HepG2 (cell line): ENCODE measurements at regions of chr22 and their contacts with region 1.

Region 1: GRCh38 chr22:35231585-35232084 is 25.7 kb upstream of the HMGXB4 start:
- DNase-seq: peak; percentile 75
- ATAC-seq: peak; percentile 89
- H3K4me3 ChIP-seq: peak overlapping the region in 1 of 3 experiments; percentile 48; a peak in 3 of 6 replicates
- H3K27ac ChIP-seq: no peak overlapping the region
- H3K4me1 ChIP-seq: peaks cover 31% of the 10 kb centered on the region
- H3K27me3 ChIP-seq: no peaks in the 10 kb centered on the region
- CTCF ChIP-seq: peak; percentile 90
- EP300 ChIP-seq: no peak
- POLR2A ChIP-seq: no peak
- RAD21 ChIP-seq: peak; percentile 56

Region 2: GRCh38 chr22:35023692-35024363 is 207.8 kb before region 1 on chr22:
- CTCF ChIA-PET with region 1: no interaction called
- POLR2A ChIA-PET with region 1: no interaction called
- in situ Hi-C with region 1: no loop called
- intact Hi-C with region 1: no loop called
- DNase-seq: no peak
- ATAC-seq: peak; percentile 84
- H3K4me3 ChIP-seq: no peak overlapping the region
- H3K27ac ChIP-seq: no peak overlapping the region
- H3K4me1 ChIP-seq: no peaks in the 10 kb centered on the region
- H3K27me3 ChIP-seq: 0 out of 5 replicates have a peak, but pooled peaks cover 0 to 2% of the 10 kb centered on the region in 2 experiments
- CTCF ChIP-seq: peak; percentile 85
- EP300 ChIP-seq: no peak
- POLR2A ChIP-seq: no peak
- RAD21 ChIP-seq: peak; percentile 68

Region 3: DNA sequence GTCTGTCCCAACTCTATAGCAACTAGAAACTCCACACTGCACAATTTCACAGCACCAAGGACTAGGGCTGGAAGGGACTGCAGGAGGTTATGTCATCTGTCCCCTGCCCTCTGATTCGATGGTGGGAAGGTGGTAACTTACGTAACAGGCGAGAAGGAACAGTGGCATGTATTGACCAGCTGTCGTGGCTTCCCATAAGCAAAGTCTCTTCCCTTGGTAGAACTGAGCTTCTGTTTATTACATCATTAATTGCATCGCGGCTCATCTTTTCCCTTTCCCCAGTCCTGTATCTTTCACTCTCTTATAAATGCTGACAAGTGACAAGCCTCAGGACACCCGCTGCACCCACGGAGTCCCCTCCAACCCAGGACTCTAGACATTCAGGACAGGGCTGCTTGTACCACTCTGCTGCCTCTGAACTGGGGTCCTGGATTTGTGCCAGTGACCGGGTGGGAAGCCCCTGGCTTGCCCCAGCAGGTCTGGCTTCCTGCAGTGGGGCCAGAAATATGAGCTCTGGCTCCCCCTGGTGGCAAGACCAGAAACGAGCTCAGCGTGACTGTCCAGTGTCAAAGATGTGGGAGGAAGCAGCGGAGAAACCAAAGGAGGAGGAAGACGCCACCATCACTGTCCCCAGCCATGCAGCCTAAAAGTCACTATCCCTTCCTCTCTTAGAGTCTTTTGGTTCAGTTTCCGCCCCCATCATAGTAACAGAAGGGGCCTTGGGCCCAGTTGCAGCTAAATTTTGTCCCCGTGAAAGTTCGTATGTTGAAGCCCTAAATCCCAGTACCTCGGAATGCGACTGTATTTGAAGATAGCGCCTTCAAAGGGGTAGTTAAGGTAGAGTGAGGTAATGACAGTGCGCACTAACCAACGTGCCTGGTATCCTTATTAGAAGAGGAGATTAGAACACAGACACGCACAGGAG is 81.2 kb before region 1 on chr22:
- CTCF ChIA-PET with region 1: no interaction called
- POLR2A ChIA-PET with region 1: no interaction called
- in situ Hi-C with region 1: no loop called
- intact Hi-C with region 1: loop called (anchors 1 kb)
- DNase-seq: peak; percentile 36
- ATAC-seq: peak; percentile 84
- H3K4me3 ChIP-seq: no peak overlapping the region
- H3K27ac ChIP-seq: no peak overlapping the region
- H3K4me1 ChIP-seq: no peaks in the 10 kb centered on the region
- H3K27me3 ChIP-seq: peaks cover 0 to 4% of the 10 kb centered on the region in 2 experiments; a peak in 2 of 5 replicates
- CTCF ChIP-seq: peak; percentile 90
- EP300 ChIP-seq: no peak
- POLR2A ChIP-seq: no peak
- RAD21 ChIP-seq: peak; percentile 58

Region 4: DNA sequence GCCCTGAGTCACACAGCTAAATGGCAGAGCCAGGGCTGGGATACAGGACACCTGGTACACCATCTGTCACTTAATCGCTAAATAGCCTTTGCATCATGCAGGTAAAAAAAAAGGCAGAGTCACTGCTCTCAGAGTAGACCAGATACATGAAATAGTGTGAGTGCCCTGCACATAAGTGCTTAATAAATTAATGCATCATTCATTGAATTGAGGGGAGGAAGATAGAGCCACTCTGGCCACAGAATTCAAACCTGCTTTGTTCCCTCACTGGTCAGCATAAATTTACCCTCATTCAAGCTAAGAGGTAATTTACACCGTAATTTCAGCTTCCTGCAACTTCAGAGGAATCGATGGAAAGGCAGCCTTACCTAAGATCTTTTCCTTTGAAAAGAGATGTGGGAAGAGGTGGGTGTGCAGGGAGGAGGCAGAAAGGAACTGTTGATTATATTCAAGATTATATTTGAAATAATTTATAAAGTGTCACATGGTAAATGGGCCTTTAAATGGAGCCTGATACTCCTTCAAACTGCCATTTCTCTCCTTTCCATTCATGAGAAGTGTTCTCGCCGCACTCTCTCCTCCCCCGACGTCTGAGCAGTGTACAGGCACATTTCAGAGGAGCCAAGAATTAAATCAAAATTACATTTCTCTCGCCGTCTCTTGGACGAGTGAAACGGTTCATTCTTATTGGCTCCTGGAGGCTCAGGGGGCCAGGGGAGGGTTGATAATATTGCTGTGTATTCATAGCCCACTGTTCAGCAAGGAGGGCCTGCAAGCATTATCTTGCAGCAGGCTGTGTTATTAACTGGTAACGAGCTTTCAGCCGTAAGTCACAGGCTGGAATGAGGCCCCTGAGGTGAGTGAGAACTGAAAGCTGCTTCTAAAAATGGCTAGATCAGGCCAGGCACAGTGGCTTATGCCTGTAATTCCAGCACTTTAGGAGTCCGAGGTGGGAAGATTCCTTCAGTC is 26.5 kb before region 1 on chr22:
- CTCF ChIA-PET with region 1: no interaction called
- POLR2A ChIA-PET with region 1: no interaction called
- in situ Hi-C with region 1: no loop called
- intact Hi-C with region 1: no loop called
- DNase-seq: no peak
- ATAC-seq: no peak
- H3K4me3 ChIP-seq: no peak overlapping the region
- H3K27ac ChIP-seq: no peak overlapping the region
- H3K4me1 ChIP-seq: 0 out of 2 replicates have a peak, but pooled peaks cover 7% of the 10 kb centered on the region
- H3K27me3 ChIP-seq: no peaks in the 10 kb centered on the region
- CTCF ChIP-seq: no peak
- EP300 ChIP-seq: no peak
- POLR2A ChIP-seq: no peak
- RAD21 ChIP-seq: no peak